Activated naive CD8-positive, alpha-beta T cell treated with anti-CD3 and anti-CD28 coated beads, Interleukin-2, amount 10 ng/mL, durations not matched to agents 7 days and 5 days (primary cell): ENCODE measurements at regions of chr2 and their contacts with region 1.

Region 1: GRCh38 chr2:152717228-152718075 is at the start of gene PRPF40A:
- DNase-seq: peak; percentile 98
- ATAC-seq: peak; percentile 78
- H3K4me3 Mint-ChIP-seq: peak within 1 kb of the TSS; percentile 95
- H3K27ac Mint-ChIP-seq: peak within 1 kb of the TSS; percentile 97
- H3K4me1 Mint-ChIP-seq: peaks cover 33% of the 10 kb centered on the region
- H3K27me3 Mint-ChIP-seq: no peaks in the 10 kb centered on the region
- total RNA-seq, gene PRPF40A: 108 to 113 TPM

Region 2: GRCh38 chr2:152694161-152694661 is 23.2 kb before region 1 on chr2:
- POLR2A ChIA-PET with region 1: interaction called, 11 read pairs
- DNase-seq: peak; percentile 41
- ATAC-seq: peak; percentile 88
- H3K4me3 Mint-ChIP-seq: peak overlapping the region; percentile 84
- H3K27ac Mint-ChIP-seq: peak overlapping the region; percentile 91
- H3K4me1 Mint-ChIP-seq: peaks cover 15% of the 10 kb centered on the region
- H3K27me3 Mint-ChIP-seq: no peaks in the 10 kb centered on the region

Region 3: DNA sequence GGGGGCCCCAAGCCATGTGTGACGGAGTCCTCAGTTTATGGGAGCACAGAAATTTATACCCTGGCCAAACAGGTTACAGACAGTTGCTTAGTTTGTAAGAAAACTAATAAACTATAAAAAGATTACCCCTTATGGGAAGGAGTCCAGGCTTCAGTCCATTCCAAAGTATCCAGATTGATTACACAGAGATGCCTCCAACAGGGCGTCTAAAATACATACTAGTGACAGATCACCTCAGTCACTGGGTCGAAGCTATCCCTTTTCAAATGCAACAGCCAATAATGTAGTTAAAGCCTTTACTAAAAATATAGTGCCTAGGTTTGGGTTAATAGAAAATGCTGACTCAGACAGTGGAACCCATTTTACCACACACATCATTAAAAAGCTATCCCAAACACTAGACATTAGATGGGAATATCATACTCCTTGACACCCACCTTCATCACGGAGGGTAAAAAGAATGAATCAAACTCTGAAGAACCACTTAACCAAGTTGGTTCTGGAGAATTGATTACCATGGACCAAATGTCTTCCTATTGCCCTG is 10.9 kb before region 1 on chr2:
- POLR2A ChIA-PET with region 1: interaction called, 15 read pairs
- DNase-seq: no peak
- ATAC-seq: no peak
- H3K4me3 Mint-ChIP-seq: no peak overlapping the region
- H3K27ac Mint-ChIP-seq: no peak overlapping the region
- H3K4me1 Mint-ChIP-seq: peaks cover 9% of the 10 kb centered on the region
- H3K27me3 Mint-ChIP-seq: no peaks in the 10 kb centered on the region

Region 4: GRCh38 chr2:152730591-152731303 is 13.3 kb after region 1 on chr2:
- POLR2A ChIA-PET with region 1: interaction called, 24 read pairs
- DNase-seq: peak; percentile 35
- ATAC-seq: peak; percentile 97
- H3K4me3 Mint-ChIP-seq: peak overlapping the region; percentile 18
- H3K27ac Mint-ChIP-seq: no peak overlapping the region
- H3K4me1 Mint-ChIP-seq: peaks cover 24% of the 10 kb centered on the region
- H3K27me3 Mint-ChIP-seq: no peaks in the 10 kb centered on the region